Activated B cell treated with CpG ODN at 0.5 μM for 24 hours (primary cell): ENCODE measurements at regions of chr7 and their contacts with region 1.

Region 1: DNA sequence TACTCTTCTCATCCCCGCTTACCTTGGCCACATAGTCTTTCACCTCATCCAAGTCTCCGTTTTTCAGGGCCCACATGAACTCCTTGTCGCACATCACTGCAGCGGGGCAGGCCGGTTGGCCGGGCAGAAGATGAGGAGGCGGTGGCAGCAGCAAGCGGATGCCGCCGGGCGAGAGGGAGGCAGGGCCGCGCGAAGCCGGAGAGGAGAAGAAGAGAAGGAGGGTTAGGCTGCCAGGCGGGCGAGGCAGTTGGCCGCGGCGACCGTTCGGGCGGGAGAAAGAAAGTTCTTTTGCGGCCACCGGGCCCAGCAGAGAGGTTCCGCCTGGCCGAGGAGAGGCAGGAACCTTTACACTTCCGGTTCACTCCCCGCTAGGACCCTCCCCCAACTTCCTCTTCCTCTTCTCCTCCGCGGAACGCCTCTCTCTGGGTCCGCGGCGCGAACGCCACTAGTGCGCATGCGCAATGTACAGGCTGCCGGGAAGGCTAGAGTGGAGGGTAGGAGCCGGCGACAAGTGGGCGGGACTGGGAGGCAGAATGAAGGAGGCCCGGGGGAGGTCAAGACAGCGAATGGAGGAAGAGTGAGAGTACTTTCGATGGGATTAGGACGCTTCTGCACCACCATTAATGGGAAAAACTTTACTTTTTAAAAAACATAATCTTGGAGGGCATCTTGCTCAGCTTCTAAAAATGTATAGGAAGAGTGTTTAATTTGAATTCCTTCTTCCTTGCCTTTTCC is at the start of gene MTPN:
- DNase-seq: peak; percentile 92
- ATAC-seq: peak; percentile 75
- H3K4me3 Mint-ChIP-seq: peak within 1 kb of the TSS; percentile 99
- H3K27ac Mint-ChIP-seq: peak within 1 kb of the TSS; percentile 99
- H3K4me1 Mint-ChIP-seq: peaks cover 89% of the 10 kb centered on the region
- H3K27me3 Mint-ChIP-seq: no peaks in the 10 kb centered on the region
- CTCF ChIP-seq: no peak
- total RNA-seq, gene MTPN: 130 and 137 TPM in 2 replicates

Region 2: GRCh38 chr7:134316539-134317344 is 1660.4 kb before region 1 on chr7 and contains the start of gene SLC35B4:
- CTCF ChIA-PET with region 1: no interaction called
- POLR2A ChIA-PET with region 1: no interaction called
- intact Hi-C with region 1: loop called (anchors 2 kb)
- DNase-seq: peak; percentile 89
- ATAC-seq: peak; percentile 97
- H3K4me3 Mint-ChIP-seq: peak within 1 kb of the TSS; percentile 94
- H3K27ac Mint-ChIP-seq: peak within 1 kb of the TSS; percentile 87
- H3K4me1 Mint-ChIP-seq: peaks cover 14% of the 10 kb centered on the region
- H3K27me3 Mint-ChIP-seq: peaks cover 4% of the 10 kb centered on the region
- CTCF ChIP-seq: no peak
- total RNA-seq, gene SLC35B4: 17.1 and 22.0 TPM in 2 replicates

Region 3: GRCh38 chr7:135211179-135211945 is 765.8 kb before region 1 on chr7 and contains the start of gene WDR91:
- CTCF ChIA-PET with region 1: no interaction called
- POLR2A ChIA-PET with region 1: no interaction called
- intact Hi-C with region 1: loop called (anchors 5 kb)
- DNase-seq: peak; percentile 87
- ATAC-seq: peak; percentile 92
- H3K4me3 Mint-ChIP-seq: peak within 1 kb of the TSS; percentile 97
- H3K27ac Mint-ChIP-seq: peak within 1 kb of the TSS; percentile 97
- H3K4me1 Mint-ChIP-seq: peaks cover 40% of the 10 kb centered on the region
- H3K27me3 Mint-ChIP-seq: no peaks in the 10 kb centered on the region
- CTCF ChIP-seq: no peak
- total RNA-seq, gene WDR91: 59.5 and 60.1 TPM in 2 replicates

Region 4: DNA sequence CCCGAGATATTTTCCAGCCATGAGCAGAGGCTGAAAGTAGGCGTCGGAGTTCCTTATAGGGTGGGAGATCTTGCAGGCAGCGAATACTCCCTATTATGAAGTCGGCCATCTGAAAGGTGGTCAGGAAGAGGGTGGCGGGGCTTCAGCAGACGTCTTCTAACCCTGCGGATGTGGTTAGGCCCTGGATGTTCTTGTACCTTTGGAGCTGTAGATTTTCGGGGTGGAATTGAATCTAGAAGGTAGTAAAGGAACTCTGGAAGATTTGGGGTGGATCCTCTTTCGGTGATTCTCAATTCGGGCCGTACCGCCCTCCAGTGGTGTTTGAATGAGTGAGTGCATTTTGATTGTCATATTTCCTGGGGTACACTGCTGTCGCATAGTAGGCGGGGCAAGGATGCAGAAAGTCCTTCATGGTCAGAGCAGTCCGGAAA is 418.8 kb before region 1 on chr7:
- CTCF ChIA-PET with region 1: no interaction called
- POLR2A ChIA-PET with region 1: no interaction called
- intact Hi-C with region 1: loop called (anchors 2 kb)
- DNase-seq: peak; percentile 46
- ATAC-seq: peak; percentile 56
- H3K4me3 Mint-ChIP-seq: no peak overlapping the region
- H3K27ac Mint-ChIP-seq: no peak overlapping the region
- H3K4me1 Mint-ChIP-seq: peaks cover 16% of the 10 kb centered on the region
- H3K27me3 Mint-ChIP-seq: no peaks in the 10 kb centered on the region
- CTCF ChIP-seq: peak; percentile 29

Region 5: DNA sequence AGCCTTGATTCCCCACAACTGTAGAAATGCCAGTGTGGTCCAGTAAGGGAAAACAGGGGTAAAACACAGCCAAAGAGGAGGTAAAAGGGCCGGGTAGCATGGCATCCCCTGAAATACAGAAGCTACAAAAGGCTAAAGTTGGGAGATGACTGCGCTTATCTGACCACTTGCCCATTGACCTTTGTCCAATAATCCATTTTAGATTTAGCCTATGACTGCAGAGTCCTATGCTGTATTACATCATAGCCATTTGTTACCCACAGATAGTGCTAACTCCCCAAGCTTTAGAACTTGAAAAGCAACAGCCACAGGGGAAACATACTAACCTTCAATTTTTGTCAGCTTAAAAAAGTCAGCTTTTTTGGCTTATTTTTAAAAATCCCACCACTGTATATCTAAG is 26.2 kb before region 1 on chr7:
- CTCF ChIA-PET with region 1: no interaction called
- POLR2A ChIA-PET with region 1: interaction called, 4 read pairs
- intact Hi-C with region 1: loop called (anchors 5 kb)
- DNase-seq: no peak
- ATAC-seq: no peak
- H3K4me3 Mint-ChIP-seq: no peak overlapping the region
- H3K27ac Mint-ChIP-seq: no peak overlapping the region
- H3K4me1 Mint-ChIP-seq: peaks cover 75% of the 10 kb centered on the region
- H3K27me3 Mint-ChIP-seq: no peaks in the 10 kb centered on the region
- CTCF ChIP-seq: no peak

Region 6: DNA sequence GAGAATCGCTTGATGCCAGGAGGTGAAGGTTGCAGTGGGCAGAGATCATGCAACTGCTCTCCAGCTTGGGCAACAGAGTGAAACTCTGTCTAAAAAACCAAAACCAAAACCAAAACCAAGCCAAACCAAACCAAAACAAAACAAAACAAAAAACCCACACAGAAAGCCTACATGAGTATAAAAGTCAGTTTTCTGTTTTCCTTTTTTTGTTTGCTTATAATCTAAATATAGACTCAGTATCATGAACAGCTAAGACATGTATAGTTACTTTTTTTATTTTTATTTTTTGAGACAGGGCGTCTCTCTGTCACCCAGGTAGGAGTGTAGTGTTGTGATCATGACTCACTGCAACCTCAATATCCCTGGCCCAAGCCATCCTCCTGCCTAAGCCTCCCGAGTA is 16.8 kb after region 1 on chr7:
- CTCF ChIA-PET with region 1: no interaction called
- POLR2A ChIA-PET with region 1: interaction called, 4 read pairs
- intact Hi-C with region 1: loop called (anchors 1 kb)
- DNase-seq: no peak
- ATAC-seq: peak; percentile 45
- H3K4me3 Mint-ChIP-seq: peak overlapping the region; percentile 38
- H3K27ac Mint-ChIP-seq: peak overlapping the region; percentile 41
- H3K4me1 Mint-ChIP-seq: peaks cover 31% of the 10 kb centered on the region
- H3K27me3 Mint-ChIP-seq: no peaks in the 10 kb centered on the region
- CTCF ChIP-seq: no peak

Region 7: DNA sequence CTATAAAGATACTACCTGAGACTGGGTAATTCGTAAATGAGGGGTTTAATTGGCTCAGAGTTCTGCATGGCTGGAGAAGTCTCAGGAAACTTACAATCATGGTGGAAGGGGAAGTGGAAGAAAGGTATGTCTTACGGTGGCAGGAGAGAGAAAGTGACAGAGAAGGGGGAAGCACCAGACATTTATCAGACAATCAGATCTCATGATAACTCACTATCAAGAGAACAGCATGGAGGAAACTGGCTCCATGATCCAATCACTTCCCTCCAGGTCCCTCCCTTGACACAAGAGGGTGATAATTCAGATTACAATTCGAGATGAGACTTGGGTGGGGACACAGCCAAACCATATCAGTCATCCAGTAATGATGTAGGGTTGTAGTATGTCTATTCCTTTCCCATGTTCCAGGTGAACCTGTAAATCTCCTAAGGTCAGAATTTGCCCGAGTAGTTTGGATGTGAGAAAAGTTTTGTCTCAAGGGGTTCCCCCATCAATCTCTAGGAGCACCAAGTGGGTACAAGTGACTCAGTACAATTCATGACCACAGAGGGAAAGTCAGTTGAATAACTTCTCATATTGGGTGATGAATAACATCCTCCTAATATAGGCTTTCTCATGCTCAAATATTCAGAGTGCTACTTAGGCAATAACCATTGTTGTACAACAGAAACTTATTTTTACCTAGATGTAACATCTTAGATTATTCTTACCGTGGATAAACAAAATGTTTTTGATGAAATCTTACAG is 39.6 kb after region 1 on chr7:
- CTCF ChIA-PET with region 1: no interaction called
- POLR2A ChIA-PET with region 1: no interaction called
- intact Hi-C with region 1: no loop called
- DNase-seq: no peak
- ATAC-seq: no peak
- H3K4me3 Mint-ChIP-seq: no peak overlapping the region
- H3K27ac Mint-ChIP-seq: no peak overlapping the region
- H3K4me1 Mint-ChIP-seq: peaks cover 9% of the 10 kb centered on the region
- H3K27me3 Mint-ChIP-seq: peaks cover 12% of the 10 kb centered on the region
- CTCF ChIP-seq: no peak

Region 8: GRCh38 chr7:136086712-136087111 is 109.5 kb after region 1 on chr7:
- CTCF ChIA-PET with region 1: no interaction called
- POLR2A ChIA-PET with region 1: no interaction called
- intact Hi-C with region 1: no loop called
- DNase-seq: no peak
- ATAC-seq: peak; percentile 98
- H3K4me3 Mint-ChIP-seq: peak overlapping the region; percentile 62
- H3K27ac Mint-ChIP-seq: no peak overlapping the region
- H3K4me1 Mint-ChIP-seq: no peaks in the 10 kb centered on the region
- H3K27me3 Mint-ChIP-seq: no peaks in the 10 kb centered on the region
- CTCF ChIP-seq: no peak